Naive thymus-derived CD4-positive, alpha-beta T cell (primary cell): ENCODE measurements at regions of chr1 and their contacts with region 1.

Region 1: DNA sequence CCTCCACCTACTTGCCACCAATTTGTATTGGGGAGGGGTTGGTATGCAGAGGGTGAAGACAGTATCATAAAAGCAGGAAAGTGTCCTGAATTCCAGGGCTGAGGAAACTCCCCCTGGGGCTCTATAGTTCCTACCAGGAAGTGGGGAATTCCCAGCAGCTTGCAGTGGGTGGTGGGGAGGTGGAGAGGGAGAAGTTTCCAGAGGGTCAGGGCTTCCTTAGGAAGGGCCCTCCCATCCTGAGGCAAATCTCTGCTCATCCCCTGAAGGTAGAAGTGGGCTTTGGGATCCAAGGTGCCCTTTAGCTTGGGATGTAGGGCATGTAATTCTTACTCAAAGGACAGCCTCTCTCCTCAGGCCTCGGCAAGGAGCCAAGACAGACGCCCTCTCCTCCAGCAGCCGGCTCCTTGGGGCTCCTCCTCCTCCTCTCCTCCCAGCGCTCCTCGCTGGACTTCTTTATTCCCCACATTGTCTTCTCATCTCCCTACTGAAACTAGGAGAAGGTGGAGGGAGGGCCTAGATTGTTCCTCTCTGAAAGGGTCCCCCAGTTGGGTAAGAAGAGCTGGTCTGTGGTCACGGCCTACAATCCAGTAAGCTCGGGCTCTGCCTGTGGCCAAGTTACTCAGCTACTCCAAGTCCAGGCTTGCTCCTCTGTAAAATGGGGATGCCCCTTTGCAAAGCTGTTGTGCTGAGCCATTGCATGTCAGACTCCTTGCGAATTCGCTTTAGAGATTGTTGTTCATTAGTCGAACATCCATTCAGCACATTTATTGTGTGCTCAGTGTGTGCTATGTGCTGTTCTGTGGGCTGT is 17.9 kb upstream of the CSF1 start:
- DNase-seq: no peak
- ATAC-seq: no peak
- H3K4me3 ChIP-seq: no peak overlapping the region
- H3K4me3 Mint-ChIP-seq: no peak overlapping the region
- H3K27ac ChIP-seq: no peak overlapping the region
- H3K27ac Mint-ChIP-seq: peak overlapping the region in 1 of 9 donors; percentile 32
- H3K4me1 ChIP-seq: peaks cover 0 to 3% of the 10 kb centered on the region in 2 donors
- H3K4me1 Mint-ChIP-seq: peaks cover 0 to 23% (median 4%) of the 10 kb centered on the region in 7 donors
- H3K27me3 ChIP-seq: no peaks in the 10 kb centered on the region
- H3K27me3 Mint-ChIP-seq: no peaks in the 10 kb centered on the region

Region 2: DNA sequence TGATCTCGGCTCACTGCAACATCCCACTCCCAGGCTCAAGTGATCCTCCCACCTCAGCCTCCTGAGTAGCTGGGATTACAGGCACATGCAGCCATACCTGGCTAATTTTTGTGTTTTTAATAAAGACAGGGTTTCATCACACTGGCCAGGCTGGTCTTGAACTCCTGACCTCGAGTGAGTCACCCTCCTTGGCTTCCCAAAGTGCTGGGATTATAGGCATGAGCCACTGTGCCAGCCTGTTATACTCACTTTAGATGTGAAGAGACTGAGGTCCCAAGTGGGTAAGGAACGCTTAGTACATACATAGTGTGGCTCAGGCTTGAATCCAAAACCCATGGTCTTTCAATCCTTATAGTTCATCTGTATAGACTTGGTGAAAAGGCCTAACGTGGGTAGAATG is 65.3 kb before region 1 on chr1:
- CTCF ChIA-PET with region 1: no interaction called
- POLR2A ChIA-PET with region 1: no interaction called
- intact Hi-C with region 1: loop called in 1 of 2 experiments (anchors 5 kb)
- DNase-seq: no peak
- ATAC-seq: no peak
- H3K4me3 ChIP-seq: no peak overlapping the region
- H3K4me3 Mint-ChIP-seq: no peak overlapping the region
- H3K27ac ChIP-seq: no peak overlapping the region
- H3K27ac Mint-ChIP-seq: no peak overlapping the region
- H3K4me1 ChIP-seq: no peaks in the 10 kb centered on the region
- H3K4me1 Mint-ChIP-seq: peaks cover 0 to 24% (median 9%) of the 10 kb centered on the region in 7 donors
- H3K27me3 ChIP-seq: no peaks in the 10 kb centered on the region
- H3K27me3 Mint-ChIP-seq: no peaks in the 10 kb centered on the region